Endothelial cell of umbilical vein (primary cell): ENCODE measurements at regions of chr10 and their contacts with region 1.

Region 1: GRCh38 chr10:13099666-13100348 is at the start of gene OPTN:
- DNase-seq: peak; percentile 88
- H3K4me3 ChIP-seq: peak within 1 kb of the TSS; percentile 71 to 92 (median 91)
- H3K27ac ChIP-seq: peak within 1 kb of the TSS; percentile 66
- H3K4me1 ChIP-seq: peaks cover 9% of the 10 kb centered on the region
- H3K27me3 ChIP-seq: no peaks in the 10 kb centered on the region
- CTCF ChIP-seq: peak; percentile 81 to 82
- POLR2A ChIP-seq: peak; percentile 56
- total RNA-seq, gene OPTN: 79.9 and 94.2 TPM in 2 replicates

Region 2: GRCh38 chr10:12348870-12349628 is 750.8 kb before region 1 on chr10 and contains the start of gene CAMK1D:
- CTCF ChIA-PET with region 1: interaction called, 3 read pairs
- POLR2A ChIA-PET with region 1: no interaction called
- dilution Hi-C with region 1: no loop called
- intact Hi-C with region 1: loop called (anchors 5 kb)
- DNase-seq: peak; percentile 40
- H3K4me3 ChIP-seq: peak within 1 kb of the TSS; percentile 19 to 62 (median 25)
- H3K27ac ChIP-seq: no peak within 1 kb of the TSS
- H3K4me1 ChIP-seq: peaks cover 6% of the 10 kb centered on the region
- H3K27me3 ChIP-seq: peaks cover 13 to 14% of the 10 kb centered on the region in 2 experiments
- CTCF ChIP-seq: peak in 1 of 2 donors; percentile 6
- POLR2A ChIP-seq: no peak
- total RNA-seq, gene CAMK1D: 1.1 and 4.2 TPM in 2 replicates

Region 3: DNA sequence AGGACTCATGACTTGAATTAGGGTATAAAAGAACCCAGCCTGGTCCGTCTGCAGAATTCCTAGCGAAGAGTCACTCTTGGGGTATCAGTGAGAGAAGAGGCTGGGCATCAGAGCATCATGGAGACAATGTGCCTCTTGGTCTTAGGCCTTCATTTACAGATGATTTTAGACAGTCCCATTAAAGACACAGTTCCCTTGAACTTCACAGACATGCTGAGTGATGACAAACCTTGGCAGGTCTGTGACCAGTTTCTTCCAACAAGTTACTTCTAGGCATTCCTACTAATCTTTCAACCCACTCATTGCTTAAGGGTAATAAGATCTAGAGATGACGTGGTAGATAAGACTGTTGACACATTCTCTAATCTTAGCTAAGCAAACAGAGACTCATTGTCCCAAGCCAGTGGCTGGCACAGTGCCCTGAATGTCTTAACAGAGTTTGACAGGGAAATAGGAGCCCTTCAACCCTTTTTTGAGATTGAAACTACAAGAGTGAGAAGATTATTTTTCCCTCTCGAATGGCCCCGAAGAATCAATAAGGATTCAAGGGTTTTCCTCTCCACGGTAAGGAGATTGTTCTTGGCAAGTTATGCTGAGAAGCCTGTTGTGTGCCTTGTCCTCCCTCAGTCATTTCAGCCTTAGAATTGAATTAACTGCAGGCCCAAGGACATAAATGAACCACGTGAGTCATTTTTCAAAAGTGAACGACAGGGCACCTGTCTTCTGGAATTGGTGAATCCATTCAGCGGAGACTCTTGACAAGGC is 379.4 kb before region 1 on chr10:
- CTCF ChIA-PET with region 1: interaction called, 4 read pairs
- POLR2A ChIA-PET with region 1: no interaction called
- dilution Hi-C with region 1: no loop called
- intact Hi-C with region 1: loop called (anchors 5 kb)
- DNase-seq: peak; percentile 96
- H3K4me3 ChIP-seq: no peak overlapping the region
- H3K27ac ChIP-seq: peak overlapping the region; percentile 65
- H3K4me1 ChIP-seq: peaks cover 23% of the 10 kb centered on the region
- H3K27me3 ChIP-seq: no peaks in the 10 kb centered on the region
- CTCF ChIP-seq: no peak
- POLR2A ChIP-seq: peak; percentile 37

Region 4: GRCh38 chr10:12844811-12845533 is 254.8 kb before region 1 on chr10:
- CTCF ChIA-PET with region 1: no interaction called
- POLR2A ChIA-PET with region 1: no interaction called
- dilution Hi-C with region 1: no loop called
- intact Hi-C with region 1: loop called (anchors 1 kb)
- DNase-seq: peak; percentile 98
- H3K4me3 ChIP-seq: peak overlapping the region in 1 of 3 experiments; percentile 12
- H3K27ac ChIP-seq: peak overlapping the region; percentile 96
- H3K4me1 ChIP-seq: peaks cover 31% of the 10 kb centered on the region
- H3K27me3 ChIP-seq: no peaks in the 10 kb centered on the region
- CTCF ChIP-seq: no peak
- POLR2A ChIP-seq: peak; percentile 56

Region 5: DNA sequence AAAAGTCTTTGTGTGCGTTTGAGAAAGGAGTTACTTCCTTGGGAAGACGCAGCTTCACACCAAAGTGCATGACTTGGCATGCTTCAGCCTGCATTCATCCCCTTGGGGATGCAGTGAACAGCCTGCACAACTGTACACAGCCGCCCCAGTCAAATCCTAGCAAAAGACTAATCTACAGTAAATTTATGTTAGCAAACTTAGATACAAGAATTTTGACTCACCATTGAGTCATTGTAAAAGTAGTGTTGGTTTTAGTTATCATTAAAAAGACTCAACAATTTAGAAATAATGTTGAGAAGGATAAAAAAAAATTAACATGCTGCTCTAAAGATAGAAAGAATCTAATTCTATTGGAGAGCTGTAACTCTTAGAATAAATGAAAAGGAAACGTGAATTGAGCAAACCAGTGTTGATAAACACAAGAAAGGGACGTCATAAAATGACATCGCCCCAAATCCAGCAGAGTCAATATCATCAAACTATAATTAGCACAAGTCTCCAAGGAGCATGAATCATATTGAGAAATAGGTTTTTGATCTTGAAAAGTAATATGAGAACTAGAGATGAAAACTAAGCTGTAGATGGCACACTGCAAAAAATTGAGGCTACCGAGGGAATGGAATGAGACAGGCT is 11.7 kb before region 1 on chr10:
- CTCF ChIA-PET with region 1: interaction called, 12 read pairs
- POLR2A ChIA-PET with region 1: no interaction called
- dilution Hi-C with region 1: no loop called
- intact Hi-C with region 1: no loop called
- DNase-seq: no peak
- H3K4me3 ChIP-seq: no peak overlapping the region
- H3K27ac ChIP-seq: no peak overlapping the region
- H3K4me1 ChIP-seq: no peaks in the 10 kb centered on the region
- H3K27me3 ChIP-seq: peaks cover 0 to 2% of the 10 kb centered on the region in 2 experiments
- CTCF ChIP-seq: no peak
- POLR2A ChIP-seq: no peak